ENCODE measurements at regions of chr3 and their contacts with region 1.

Region 1: DNA sequence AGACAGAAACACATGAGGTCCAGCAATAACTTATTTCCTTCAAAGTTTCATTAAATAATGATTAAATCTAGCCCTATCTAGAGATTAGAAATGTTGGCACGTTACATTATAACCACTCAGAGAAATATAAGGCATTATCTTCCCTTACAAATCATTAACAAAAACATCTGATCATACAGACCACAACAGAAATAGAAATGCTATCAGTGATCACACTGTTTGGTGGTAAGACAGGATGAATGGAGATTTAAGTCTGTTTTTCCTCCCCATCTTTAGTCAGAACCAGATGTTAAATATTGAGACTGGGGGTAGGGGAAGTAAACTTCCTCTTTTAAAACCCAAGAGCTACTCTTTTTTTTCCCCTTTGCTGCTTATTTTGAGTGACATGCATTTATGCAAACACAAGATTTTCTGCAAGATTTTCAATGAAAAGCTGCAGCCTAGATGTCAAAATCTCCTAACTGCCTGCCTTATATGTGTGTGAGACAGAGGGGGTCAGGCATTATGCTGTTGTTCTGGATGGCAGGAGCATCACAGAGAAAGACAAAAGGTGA is 70.4 kb downstream of the CBLB start:
- DNase-seq: peak in 1 of 9 experiments; percentile 38
- ATAC-seq: peak; percentile 47
- H3K4me3 ChIP-seq: no peak overlapping the region
- H3K4me3 Mint-ChIP-seq: peak overlapping the region; percentile 23
- H3K27ac ChIP-seq: no peak overlapping the region
- H3K27ac Mint-ChIP-seq: peak overlapping the region; percentile 37
- H3K4me1 ChIP-seq: peaks cover 40% of the 10 kb centered on the region
- H3K4me1 Mint-ChIP-seq: peaks cover 85% of the 10 kb centered on the region
- H3K27me3 ChIP-seq: no peaks in the 10 kb centered on the region
- H3K27me3 Mint-ChIP-seq: no peaks in the 10 kb centered on the region
- CTCF ChIP-seq: no peak

Region 2: GRCh38 chr3:105785803-105786202 is 12.7 kb before region 1 on chr3:
- CTCF ChIA-PET with region 1: no interaction called
- POLR2A ChIA-PET with region 1: interaction called, 5 read pairs
- intact Hi-C with region 1: loop called in 1 of 2 experiments (anchors 1 kb)
- DNase-seq: peak in 1 of 9 experiments; percentile 58
- ATAC-seq: peak; percentile 29
- H3K4me3 ChIP-seq: peak overlapping the region in 1 of 2 experiments; percentile 26
- H3K4me3 Mint-ChIP-seq: no peak overlapping the region
- H3K27ac ChIP-seq: peak overlapping the region in 1 of 2 experiments; percentile 44
- H3K27ac Mint-ChIP-seq: peak overlapping the region; percentile 7
- H3K4me1 ChIP-seq: peaks cover 47% of the 10 kb centered on the region
- H3K4me1 Mint-ChIP-seq: peaks cover 68% of the 10 kb centered on the region
- H3K27me3 ChIP-seq: no peaks in the 10 kb centered on the region
- H3K27me3 Mint-ChIP-seq: no peaks in the 10 kb centered on the region
- CTCF ChIP-seq: no peak

Measured in CD8-positive, alpha-beta T cell (primary cell).